Activated naive CD8-positive, alpha-beta T cell treated with anti-CD3 and anti-CD28 coated beads, Interleukin-2, amount 10 ng/mL, durations not matched to agents 7 days and 5 days (primary cell): ENCODE measurements at regions of chr12 and their contacts with region 1.

Region 1: DNA sequence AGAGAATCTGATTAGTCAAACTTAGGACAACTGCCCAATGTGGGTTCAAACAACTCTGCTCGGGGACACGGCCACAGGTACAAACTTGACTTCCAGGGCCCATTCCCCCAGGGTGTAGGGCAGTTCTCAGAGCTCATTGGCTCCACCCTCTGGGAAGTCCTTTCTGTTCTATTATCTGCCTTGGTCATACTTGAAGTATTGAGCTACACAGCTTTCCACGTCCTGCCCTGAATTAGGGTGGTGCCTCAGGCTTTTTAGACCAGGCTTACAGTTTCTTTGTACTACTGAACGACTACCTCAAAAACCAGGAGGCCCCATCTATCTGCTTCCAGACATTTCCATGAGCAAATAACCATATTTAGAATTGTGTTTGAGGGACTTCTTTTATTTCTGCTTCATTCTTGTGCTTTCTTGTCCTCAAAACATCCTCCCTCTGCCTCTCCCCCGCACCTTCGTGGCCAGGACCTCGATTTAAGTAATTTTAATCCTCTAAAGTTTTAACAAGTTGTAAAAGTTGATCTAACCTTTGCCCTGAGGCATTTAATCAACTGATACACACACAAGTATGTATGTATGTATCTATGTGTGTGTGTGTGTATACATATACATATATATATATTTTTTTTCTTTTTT is 281.7 kb upstream of the AMIGO2 start:
- DNase-seq: peak; percentile 65
- ATAC-seq: peak; percentile 83
- H3K4me3 Mint-ChIP-seq: peak overlapping the region; percentile 83
- H3K27ac Mint-ChIP-seq: peak overlapping the region; percentile 95
- H3K4me1 Mint-ChIP-seq: peaks cover 44% of the 10 kb centered on the region
- H3K27me3 Mint-ChIP-seq: no peaks in the 10 kb centered on the region

Region 2: DNA sequence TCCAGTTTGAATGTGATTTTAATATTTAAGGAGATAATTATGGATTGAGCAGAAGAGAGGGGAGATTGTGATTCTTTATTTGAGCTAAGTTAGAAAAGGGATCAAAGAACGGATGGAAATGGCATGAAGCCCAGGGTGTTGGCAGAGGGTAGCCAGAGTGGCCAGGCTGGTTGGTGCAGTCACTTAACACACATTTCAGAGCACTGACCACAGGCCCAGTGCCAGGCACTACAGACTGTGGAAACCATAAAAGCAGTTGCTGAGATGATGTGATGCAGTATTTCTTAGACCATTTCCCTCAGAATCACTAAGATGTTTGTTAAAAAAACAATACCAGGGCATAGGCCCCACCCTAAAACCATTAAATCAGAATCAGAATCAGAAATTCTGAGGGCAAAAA is 114.1 kb before region 1 on chr12:
- POLR2A ChIA-PET with region 1: no interaction called
- DNase-seq: no peak
- ATAC-seq: no peak
- H3K4me3 Mint-ChIP-seq: no peak overlapping the region
- H3K27ac Mint-ChIP-seq: no peak overlapping the region
- H3K4me1 Mint-ChIP-seq: peaks cover 4% of the 10 kb centered on the region
- H3K27me3 Mint-ChIP-seq: no peaks in the 10 kb centered on the region

Region 3: GRCh38 chr12:47307680-47308399 is 53.7 kb before region 1 on chr12:
- POLR2A ChIA-PET with region 1: interaction called, 10 read pairs
- DNase-seq: peak; percentile 47
- ATAC-seq: peak; percentile 93
- H3K4me3 Mint-ChIP-seq: peak overlapping the region; percentile 86
- H3K27ac Mint-ChIP-seq: peak overlapping the region; percentile 92
- H3K4me1 Mint-ChIP-seq: peaks cover 42% of the 10 kb centered on the region
- H3K27me3 Mint-ChIP-seq: no peaks in the 10 kb centered on the region

Region 4: DNA sequence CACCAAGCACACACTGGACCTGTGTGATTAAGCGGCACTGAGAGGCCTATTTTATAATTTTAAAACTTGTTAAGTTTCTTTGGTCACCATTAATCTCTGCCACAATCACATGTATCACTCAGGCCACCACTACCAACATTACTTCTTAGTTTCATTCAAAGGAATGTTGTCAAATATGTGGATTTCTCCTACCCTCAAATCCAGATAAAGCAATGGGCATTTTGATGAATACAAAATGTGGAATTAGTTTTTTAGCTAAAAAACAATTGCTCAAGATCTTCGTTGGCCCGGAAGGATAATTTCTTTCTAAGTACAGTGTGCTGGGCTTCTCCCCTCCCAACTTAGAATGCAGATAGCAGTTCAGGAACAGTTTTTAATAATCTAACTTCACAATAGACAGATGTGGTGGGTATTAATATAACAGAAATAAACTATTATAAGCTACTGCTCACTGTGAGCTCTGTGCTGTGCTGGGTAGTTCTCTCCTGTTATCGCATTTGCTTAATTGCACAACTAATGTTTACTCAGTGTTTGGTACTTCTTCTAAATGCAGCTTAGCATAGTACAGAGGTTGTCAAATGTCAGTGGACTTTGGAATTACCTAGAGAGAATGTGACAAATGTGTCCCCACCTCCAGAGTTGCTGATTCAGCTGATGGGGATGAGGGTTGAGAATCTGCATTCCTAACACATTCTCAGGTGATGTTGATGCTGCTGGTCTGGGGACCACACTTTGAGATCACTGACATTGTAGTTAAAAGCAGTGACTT is 15.1 kb before region 1 on chr12:
- POLR2A ChIA-PET with region 1: interaction called, 12 read pairs
- DNase-seq: no peak
- ATAC-seq: no peak
- H3K4me3 Mint-ChIP-seq: no peak overlapping the region
- H3K27ac Mint-ChIP-seq: no peak overlapping the region
- H3K4me1 Mint-ChIP-seq: peaks cover 32% of the 10 kb centered on the region
- H3K27me3 Mint-ChIP-seq: no peaks in the 10 kb centered on the region

Region 5: DNA sequence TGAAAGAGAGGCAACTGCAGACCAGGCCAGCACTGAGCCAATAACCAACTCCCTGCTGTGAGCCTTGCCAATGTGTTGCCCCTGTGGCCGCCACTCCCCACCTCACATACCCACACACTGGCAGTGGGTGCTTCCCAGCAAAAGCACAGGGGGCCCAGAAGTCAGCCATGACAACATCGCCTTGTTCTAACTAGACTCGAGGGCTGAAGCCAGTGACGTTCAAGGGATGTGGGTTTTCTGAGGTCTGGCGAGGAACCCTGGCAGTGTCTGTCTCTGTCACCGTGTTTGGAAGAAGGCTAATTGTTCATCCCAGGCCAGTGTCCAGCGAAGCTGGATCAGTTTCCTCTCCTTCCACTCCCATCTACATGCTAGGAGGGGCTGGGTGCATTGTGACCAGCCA is 30.1 kb after region 1 on chr12:
- POLR2A ChIA-PET with region 1: interaction called, 30 read pairs
- DNase-seq: peak; percentile 68
- ATAC-seq: peak; percentile 83
- H3K4me3 Mint-ChIP-seq: peak overlapping the region; percentile 73
- H3K27ac Mint-ChIP-seq: peak overlapping the region; percentile 100
- H3K4me1 Mint-ChIP-seq: peaks cover 65% of the 10 kb centered on the region
- H3K27me3 Mint-ChIP-seq: no peaks in the 10 kb centered on the region